GM12878 (cell line): ENCODE measurements at regions of chr19 and their contacts with region 1.

Region 1: DNA sequence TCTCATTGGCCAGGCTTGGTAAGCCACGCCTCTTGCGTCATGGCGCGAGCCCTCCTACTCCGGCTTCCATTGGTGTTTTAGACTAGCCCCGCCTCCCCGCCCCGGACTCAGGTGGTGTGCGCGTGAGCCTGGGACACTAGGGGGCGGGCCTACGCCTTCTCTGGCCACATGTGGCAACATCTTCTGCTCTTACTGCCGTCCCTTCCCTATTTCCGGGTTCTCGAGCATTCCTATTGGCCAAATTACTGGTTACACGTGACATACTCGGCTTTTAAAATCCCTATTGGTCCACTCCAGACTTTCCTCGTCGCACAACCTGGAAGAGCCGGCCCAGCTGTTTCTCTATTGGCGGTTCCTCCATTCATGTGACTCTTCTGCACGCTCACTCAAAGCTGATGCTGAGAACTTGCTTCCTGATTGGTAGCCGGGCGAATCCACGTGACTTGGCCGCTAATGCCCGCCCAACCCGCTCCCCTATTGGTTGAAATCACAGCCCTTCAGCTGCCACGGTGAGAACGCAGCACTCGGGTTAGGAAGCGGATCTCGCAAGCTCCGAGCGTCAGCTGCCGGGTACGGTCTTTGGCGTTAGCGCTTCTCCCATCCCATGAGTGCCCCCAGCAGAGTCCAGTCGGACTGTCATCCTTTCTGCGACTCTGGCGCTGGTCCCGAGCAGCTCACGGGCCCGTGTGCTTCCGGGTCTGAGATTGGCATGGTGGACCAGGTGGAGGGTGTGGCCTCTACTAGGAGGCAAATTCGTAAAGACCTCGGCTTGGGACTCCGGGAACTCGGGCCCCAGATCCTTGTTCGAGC is at the start of gene BLOC1S3:
- DNase-seq: peak; percentile 100
- ATAC-seq: peak; percentile 89
- H3K4me3 ChIP-seq: peak within 1 kb of the TSS; percentile 96
- H3K27ac ChIP-seq: peak within 1 kb of the TSS; percentile 79
- H3K4me1 ChIP-seq: peaks cover 25% of the 10 kb centered on the region
- H3K27me3 ChIP-seq: no peaks in the 10 kb centered on the region
- CTCF ChIP-seq: peak; percentile 19 to 48 (median 37); a peak in 4 of 6 replicates
- EP300 ChIP-seq: no peak
- POLR2A ChIP-seq: peak; percentile 83
- RAD21 ChIP-seq: no peak
- polyA plus RNA-seq, gene BLOC1S3: 10.0 to 14.5 TPM

Region 2: GRCh38 chr19:45001087-45001739 is 177.3 kb before region 1 on chr19 and contains the start of gene RELB:
- CTCF ChIA-PET with region 1: no interaction called
- POLR2A ChIA-PET with region 1: interaction called, 11 read pairs
- RAD21 ChIA-PET with region 1: interaction called, 3 read pairs
- SMC1A ChIA-PET with region 1: no interaction called
- in situ Hi-C with region 1: no loop called
- intact Hi-C with region 1: no loop called
- DNase-seq: peak; percentile 57
- ATAC-seq: peak; percentile 74
- H3K4me3 ChIP-seq: peak within 1 kb of the TSS; percentile 91
- H3K27ac ChIP-seq: peak within 1 kb of the TSS; percentile 92
- H3K4me1 ChIP-seq: peaks cover 3% of the 10 kb centered on the region; the same call in 1 of the 2 replicates
- H3K27me3 ChIP-seq: no peaks in the 10 kb centered on the region
- CTCF ChIP-seq: no peak
- EP300 ChIP-seq: 0 out of 4 replicates have a peak, but pooled peaks have one; percentile 22 to 25
- POLR2A ChIP-seq: peak; percentile 89
- RAD21 ChIP-seq: no peak
- polyA plus RNA-seq, gene RELB: 0.66 to 3.2 TPM

Region 3: GRCh38 chr19:45117669-45118068 is 60.8 kb before region 1 on chr19:
- CTCF ChIA-PET with region 1: interaction called, 6 read pairs
- POLR2A ChIA-PET with region 1: interaction called, 11 read pairs
- RAD21 ChIA-PET with region 1: interaction called, 5 read pairs
- SMC1A ChIA-PET with region 1: interaction called, 4 read pairs
- in situ Hi-C with region 1: no loop called
- intact Hi-C with region 1: no loop called
- DNase-seq: no peak
- ATAC-seq: peak; percentile 11
- H3K4me3 ChIP-seq: no peak overlapping the region
- H3K27ac ChIP-seq: peak overlapping the region; percentile 66; the same call in 1 of the 2 replicates
- H3K4me1 ChIP-seq: peaks cover 84% of the 10 kb centered on the region
- H3K27me3 ChIP-seq: no peaks in the 10 kb centered on the region
- CTCF ChIP-seq: no peak
- EP300 ChIP-seq: no peak
- POLR2A ChIP-seq: no peak
- RAD21 ChIP-seq: no peak

Region 4: DNA sequence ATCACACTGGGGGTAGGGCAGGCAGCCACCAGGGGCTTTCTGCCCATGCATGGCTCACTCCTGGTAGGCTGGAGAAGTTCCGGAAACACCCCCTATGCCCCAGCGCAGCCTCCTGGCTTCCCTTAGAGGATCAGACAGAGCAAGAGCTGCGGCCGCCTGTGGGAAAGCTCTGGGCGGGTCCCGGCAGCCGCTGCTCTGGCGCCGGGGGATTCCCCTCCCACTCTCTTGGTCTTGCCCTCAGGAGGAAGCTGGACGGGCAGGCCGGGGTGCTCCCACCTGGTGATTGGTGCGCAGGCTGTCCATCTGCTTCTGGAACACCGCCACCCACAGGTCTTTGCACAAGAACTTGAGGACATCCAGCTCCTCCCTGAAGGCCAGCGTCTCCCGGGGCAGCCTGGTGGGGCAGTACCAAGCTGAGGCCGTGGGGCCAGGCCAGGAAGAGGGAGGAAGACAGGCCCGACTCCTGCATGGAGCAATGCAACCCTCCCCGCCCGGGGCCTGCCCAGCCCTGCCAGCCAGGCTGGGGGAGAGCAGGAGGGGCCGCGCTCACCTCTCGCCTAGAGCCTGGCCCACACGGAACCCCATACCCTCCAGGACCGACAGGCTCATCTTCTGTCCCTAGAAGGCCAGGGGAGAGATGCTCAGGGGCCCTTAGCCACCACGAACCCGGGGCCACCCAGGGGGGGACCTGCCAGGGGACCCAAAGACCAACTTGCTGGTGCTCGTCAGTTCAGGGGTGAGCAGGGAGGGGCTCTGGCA is 13.7 kb before region 1 on chr19:
- CTCF ChIA-PET with region 1: interaction called, 9 read pairs
- POLR2A ChIA-PET with region 1: interaction called, 26 read pairs
- RAD21 ChIA-PET with region 1: interaction called, 19 read pairs
- SMC1A ChIA-PET with region 1: interaction called, 9 read pairs
- in situ Hi-C with region 1: no loop called
- intact Hi-C with region 1: no loop called
- DNase-seq: peak; percentile 64
- ATAC-seq: peak; percentile 92
- H3K4me3 ChIP-seq: no peak overlapping the region
- H3K27ac ChIP-seq: peak overlapping the region; percentile 64; the same call in 1 of the 2 replicates
- H3K4me1 ChIP-seq: peaks cover 18% of the 10 kb centered on the region
- H3K27me3 ChIP-seq: no peaks in the 10 kb centered on the region; a peak in 1 of 4 replicates
- CTCF ChIP-seq: peak; percentile 8 to 33 (median 32); a peak in 3 of 6 replicates
- EP300 ChIP-seq: no peak
- POLR2A ChIP-seq: no peak
- RAD21 ChIP-seq: no peak

Region 5: DNA sequence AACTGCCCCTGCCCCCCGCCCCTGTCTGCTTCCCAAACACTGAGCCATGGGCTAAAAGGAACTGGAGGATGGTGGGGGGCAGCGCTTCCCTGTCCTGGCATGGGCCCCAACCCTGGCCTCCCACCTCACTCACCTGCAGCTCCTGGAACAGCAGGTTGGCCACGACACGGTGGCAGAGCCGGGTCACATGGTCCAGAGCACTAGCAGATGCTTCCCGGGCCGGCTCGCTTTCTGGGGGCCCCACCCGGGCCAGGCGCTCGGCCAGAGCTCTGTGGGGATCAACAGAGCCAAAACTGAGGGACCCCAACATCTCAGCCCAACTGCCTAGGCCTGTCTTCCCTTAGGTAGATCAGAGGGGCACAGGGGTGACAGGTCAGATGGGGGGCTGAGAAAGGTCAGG is 46.2 kb after region 1 on chr19:
- CTCF ChIA-PET with region 1: no interaction called
- POLR2A ChIA-PET with region 1: no interaction called
- RAD21 ChIA-PET with region 1: no interaction called
- SMC1A ChIA-PET with region 1: no interaction called
- in situ Hi-C with region 1: no loop called
- intact Hi-C with region 1: no loop called
- DNase-seq: no peak
- ATAC-seq: no peak
- H3K4me3 ChIP-seq: no peak overlapping the region
- H3K27ac ChIP-seq: no peak overlapping the region
- H3K4me1 ChIP-seq: no peaks in the 10 kb centered on the region
- H3K27me3 ChIP-seq: no peaks in the 10 kb centered on the region; a peak in 1 of 4 replicates
- CTCF ChIP-seq: no peak
- EP300 ChIP-seq: no peak
- POLR2A ChIP-seq: no peak
- RAD21 ChIP-seq: no peak